Astrocyte of the cerebellum (primary cell): ENCODE measurements at regions of chr3 and their contacts with region 1.

Region 1: GRCh38 chr3:8755563-8756237 is 13.7 kb downstream of the OXTR start:
- DNase-seq: no peak
- H3K4me3 ChIP-seq: no peak overlapping the region
- CTCF ChIP-seq: peak; percentile 47

Region 2: DNA sequence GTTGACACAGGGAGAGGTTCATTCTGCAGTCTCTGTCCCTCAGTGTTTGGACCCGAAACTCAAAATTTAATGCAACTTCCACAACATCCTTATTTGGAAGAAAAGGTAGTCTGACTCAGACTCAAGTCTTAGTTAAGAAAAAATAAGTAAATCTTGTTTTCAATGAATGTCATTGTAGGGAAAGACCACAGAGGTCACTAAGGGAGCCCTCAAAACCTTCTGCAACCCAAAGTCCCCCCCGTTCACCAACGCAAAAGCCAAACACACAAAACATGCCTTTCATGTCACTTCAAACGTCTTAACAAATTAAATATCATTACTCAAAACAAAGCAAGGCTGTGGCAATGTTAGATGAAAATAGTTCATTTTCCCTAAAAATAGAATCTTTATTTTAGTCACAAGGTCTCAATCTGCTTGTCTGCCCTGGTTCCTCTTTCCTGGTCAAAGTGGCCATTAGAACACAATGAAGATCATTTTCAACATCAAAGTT is 90.2 kb before region 1 on chr3:
- in situ Hi-C with region 1: loop called (anchors 5 kb)
- DNase-seq: no peak
- H3K4me3 ChIP-seq: no peak overlapping the region
- CTCF ChIP-seq: no peak

Region 3: GRCh38 chr3:9201266-9201665 is 445.6 kb after region 1 on chr3:
- in situ Hi-C with region 1: no loop called
- DNase-seq: peak; percentile 23
- H3K4me3 ChIP-seq: no peak overlapping the region
- CTCF ChIP-seq: no peak

Region 4: DNA sequence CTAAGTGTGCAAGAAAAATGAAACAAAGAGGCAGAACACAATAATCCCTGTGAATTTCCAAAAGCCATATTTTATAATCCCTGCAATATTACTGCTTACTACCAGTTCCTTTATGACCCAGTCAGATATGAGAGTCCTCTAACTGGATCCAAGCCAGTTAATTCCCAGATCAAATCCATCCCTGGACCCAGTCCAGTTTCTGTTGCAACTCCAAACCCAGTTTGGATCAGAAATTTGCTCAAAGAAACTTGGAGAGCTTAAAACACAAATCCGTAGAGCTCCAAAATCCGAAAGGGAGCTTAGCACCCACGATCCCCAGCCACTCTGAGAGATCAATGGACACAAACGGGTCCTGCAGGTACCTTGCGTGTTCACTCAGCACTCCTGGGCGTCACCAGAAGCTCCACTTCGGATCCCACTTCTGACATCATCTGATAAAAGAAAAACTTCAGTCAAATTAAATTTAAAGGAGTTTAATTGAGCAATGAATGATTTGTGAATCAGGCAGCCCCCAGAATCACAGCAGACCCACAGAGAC is 574.5 kb after region 1 on chr3:
- in situ Hi-C with region 1: no loop called
- DNase-seq: no peak
- H3K4me3 ChIP-seq: no peak overlapping the region
- CTCF ChIP-seq: no peak